BJ (cell line): ENCODE measurements at regions of chr17 and their contacts with region 1.

Region 1: DNA sequence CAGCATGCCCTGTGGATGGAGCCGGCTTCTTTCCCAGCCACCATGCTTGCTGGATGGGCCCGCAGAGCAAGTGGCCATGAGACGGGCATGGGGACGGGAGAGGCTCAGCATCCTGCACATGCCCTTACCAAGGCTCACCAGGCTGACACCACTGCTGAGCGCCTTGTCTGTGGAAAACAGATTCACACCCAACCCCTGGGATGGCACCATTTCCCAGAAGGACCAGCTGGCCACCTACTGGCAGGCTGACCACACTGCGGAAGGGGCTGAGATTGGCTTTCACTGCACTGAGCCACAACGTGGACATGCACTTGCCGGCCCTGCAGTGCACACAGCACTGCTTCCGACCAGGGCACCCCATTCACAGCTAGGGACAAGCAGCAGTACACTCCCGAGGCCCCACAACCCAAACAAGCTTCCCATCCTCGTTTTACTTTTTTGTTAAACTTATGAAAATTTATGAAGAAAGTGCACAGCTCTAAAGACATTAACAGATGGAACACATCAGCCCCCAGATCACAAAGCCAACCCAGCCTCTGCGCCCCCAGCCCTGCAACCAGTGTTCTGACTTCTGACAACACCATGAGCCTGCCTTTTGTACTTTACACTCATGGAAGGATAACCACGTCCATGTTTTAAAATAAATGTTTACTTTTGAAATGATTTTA is 13.9 kb upstream of the KRTAP17-1 start:
- DNase-seq: no peak
- H3K4me3 ChIP-seq: no peak overlapping the region
- H3K27me3 ChIP-seq: no peaks in the 10 kb centered on the region
- CTCF ChIP-seq: peak; percentile 92

Region 2: DNA sequence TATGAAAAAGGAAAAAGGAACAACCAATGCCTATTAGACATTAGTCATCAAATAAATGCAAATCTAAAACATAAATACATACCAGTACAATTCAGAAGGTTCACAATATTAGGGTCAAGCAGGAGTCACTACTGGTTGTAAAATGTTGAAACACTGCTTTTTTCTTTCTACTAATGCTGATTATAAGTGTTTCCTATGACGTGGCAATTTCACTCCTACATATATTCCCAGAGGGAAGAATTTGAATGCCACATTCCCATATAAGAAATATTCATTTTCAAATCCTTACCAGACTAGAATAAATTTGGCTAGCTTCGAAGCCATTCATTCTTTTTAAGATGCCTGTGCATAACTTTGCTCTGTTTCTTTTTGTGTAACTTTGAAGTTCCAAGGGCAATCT is 105.6 kb before region 1 on chr17:
- CTCF ChIA-PET with region 1: no interaction called
- POLR2A ChIA-PET with region 1: no interaction called
- DNase-seq: no peak
- H3K4me3 ChIP-seq: no peak overlapping the region
- H3K27me3 ChIP-seq: no peaks in the 10 kb centered on the region
- CTCF ChIP-seq: no peak

Region 3: GRCh38 chr17:41347869-41348773 is 18.7 kb after region 1 on chr17:
- CTCF ChIA-PET with region 1: interaction called, 10 read pairs
- POLR2A ChIA-PET with region 1: no interaction called
- DNase-seq: no peak
- H3K4me3 ChIP-seq: no peak overlapping the region
- H3K27me3 ChIP-seq: no peaks in the 10 kb centered on the region
- CTCF ChIP-seq: no peak

Region 4: DNA sequence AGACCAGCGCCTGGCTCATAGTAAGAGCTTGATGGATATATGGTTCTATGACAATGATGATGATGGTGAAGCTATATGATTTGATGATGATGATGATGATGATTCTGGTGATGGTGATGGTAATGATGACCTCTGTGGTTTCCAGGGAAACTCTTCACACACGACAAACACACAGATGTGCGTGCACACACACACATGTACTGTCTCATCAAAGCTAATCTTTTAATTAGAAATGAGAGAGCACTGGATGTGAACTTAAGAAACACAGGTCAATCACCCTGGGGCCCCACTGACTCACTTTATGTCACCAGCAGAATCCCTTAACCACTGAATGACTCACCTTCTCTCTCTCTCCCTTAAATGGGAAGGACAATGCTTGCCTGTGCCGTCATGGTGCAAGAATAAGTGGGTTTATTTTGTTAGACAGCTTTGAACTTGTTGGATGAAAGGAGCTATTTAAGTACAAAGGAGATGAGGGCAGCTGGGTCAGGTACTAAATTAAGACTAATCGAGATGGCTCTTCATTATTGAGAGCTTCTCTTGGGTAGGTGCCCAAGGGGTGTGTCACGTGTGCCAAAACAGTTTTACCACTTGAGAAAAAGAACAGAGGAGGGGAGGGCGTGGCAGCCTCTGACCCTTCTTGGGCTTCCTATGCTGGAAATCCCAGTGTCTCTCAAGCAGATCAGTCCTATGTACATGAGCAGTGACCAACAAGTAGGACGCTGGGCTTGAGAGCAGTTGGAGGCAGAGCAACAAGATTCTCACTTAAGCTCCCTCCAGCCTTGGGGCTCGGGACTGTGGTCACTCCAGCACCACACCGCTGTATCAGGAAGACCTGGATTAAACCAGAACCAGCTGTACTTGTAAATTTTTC is 74.6 kb after region 1 on chr17:
- CTCF ChIA-PET with region 1: interaction called, 10 read pairs
- POLR2A ChIA-PET with region 1: no interaction called
- DNase-seq: peak; percentile 94
- H3K4me3 ChIP-seq: no peak overlapping the region
- H3K27me3 ChIP-seq: no peaks in the 10 kb centered on the region
- CTCF ChIP-seq: no peak